IMR-90 (cell line): ENCODE measurements at regions of chr1 and their contacts with region 1.

Region 1: DNA sequence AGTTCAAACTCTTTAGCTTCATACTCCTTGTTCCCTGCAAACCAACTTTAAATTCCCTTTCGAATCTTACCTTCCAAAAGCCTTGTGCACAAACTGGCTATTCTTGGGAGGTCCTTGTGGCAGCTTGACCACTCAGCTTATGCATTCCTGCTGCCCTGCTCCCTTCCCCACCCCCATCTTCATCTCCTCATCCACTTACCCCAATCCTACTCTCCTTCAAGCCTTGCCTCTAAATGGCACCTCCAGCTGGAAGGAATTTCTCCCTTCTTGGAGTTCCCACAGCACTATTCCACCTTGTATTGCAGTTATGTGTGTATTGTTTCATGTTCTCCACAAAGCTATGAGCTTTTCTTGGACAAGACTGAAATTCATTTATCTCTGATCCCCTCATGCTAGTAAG is 15.3 kb upstream of the DIRAS3 start:
- DNase-seq: no peak
- ATAC-seq: no peak
- H3K4me3 ChIP-seq: no peak overlapping the region
- H3K27ac ChIP-seq: no peak overlapping the region
- H3K4me1 ChIP-seq: no peaks in the 10 kb centered on the region
- H3K27me3 ChIP-seq: no peaks in the 10 kb centered on the region
- CTCF ChIP-seq: no peak
- POLR2A ChIP-seq: no peak
- RAD21 ChIP-seq: no peak

Region 2: GRCh38 chr1:67250051-67250653 is 815.6 kb before region 1 on chr1:
- CTCF ChIA-PET with region 1: no interaction called
- POLR2A ChIA-PET with region 1: no interaction called
- dilution Hi-C with region 1: no loop called
- in situ Hi-C with region 1: no loop called
- intact Hi-C with region 1: no loop called
- DNase-seq: no peak
- ATAC-seq: no peak
- H3K4me3 ChIP-seq: no peak overlapping the region
- H3K27ac ChIP-seq: no peak overlapping the region
- H3K4me1 ChIP-seq: no peaks in the 10 kb centered on the region
- H3K27me3 ChIP-seq: no peaks in the 10 kb centered on the region
- CTCF ChIP-seq: no peak
- POLR2A ChIP-seq: no peak
- RAD21 ChIP-seq: no peak

Region 3: GRCh38 chr1:67590329-67590728 is 475.4 kb before region 1 on chr1:
- CTCF ChIA-PET with region 1: no interaction called
- POLR2A ChIA-PET with region 1: no interaction called
- dilution Hi-C with region 1: no loop called
- in situ Hi-C with region 1: no loop called
- intact Hi-C with region 1: no loop called
- DNase-seq: peak; percentile 45
- ATAC-seq: peak; percentile 37
- H3K4me3 ChIP-seq: no peak overlapping the region
- H3K27ac ChIP-seq: no peak overlapping the region
- H3K4me1 ChIP-seq: peaks cover 1% of the 10 kb centered on the region; the same call in 1 of the 2 replicates
- H3K27me3 ChIP-seq: no peaks in the 10 kb centered on the region; the same call in 1 of the 2 replicates
- CTCF ChIP-seq: no peak
- POLR2A ChIP-seq: no peak
- RAD21 ChIP-seq: no peak

Region 4: DNA sequence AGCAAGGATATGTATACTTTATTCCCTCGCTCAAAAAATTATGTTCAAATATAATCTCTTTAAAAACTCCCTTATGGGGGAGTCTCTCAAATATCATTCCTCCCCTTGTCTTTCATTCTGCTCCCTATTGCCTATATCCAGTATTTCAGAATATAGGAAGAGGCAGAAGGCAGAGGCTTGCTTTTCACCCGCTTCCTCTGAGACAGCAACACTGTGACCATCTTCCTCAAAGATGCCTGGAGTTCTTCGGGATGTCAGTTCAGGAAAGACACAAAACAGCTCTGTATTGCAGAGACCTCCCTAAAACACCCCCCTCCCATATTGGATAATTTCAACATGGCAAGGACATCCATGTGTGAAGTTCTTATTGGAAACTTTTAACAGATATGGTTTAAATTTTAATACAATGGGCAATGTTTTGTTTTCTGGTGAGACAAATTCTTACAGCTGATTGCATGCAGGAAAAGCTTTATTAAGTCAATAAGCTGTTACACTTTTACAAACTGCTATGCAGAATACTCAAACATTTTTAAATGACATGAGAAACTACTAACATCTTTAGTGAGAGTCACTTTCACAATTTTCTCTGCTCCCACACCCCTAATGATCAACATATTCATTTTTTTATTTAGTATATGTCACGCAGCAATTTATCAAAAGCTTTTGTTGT is 20.1 kb before region 1 on chr1:
- CTCF ChIA-PET with region 1: no interaction called
- POLR2A ChIA-PET with region 1: no interaction called
- dilution Hi-C with region 1: no loop called
- in situ Hi-C with region 1: no loop called
- intact Hi-C with region 1: loop called (anchors 1 kb)
- DNase-seq: no peak
- ATAC-seq: no peak
- H3K4me3 ChIP-seq: no peak overlapping the region
- H3K27ac ChIP-seq: no peak overlapping the region
- H3K4me1 ChIP-seq: no peaks in the 10 kb centered on the region
- H3K27me3 ChIP-seq: no peaks in the 10 kb centered on the region
- CTCF ChIP-seq: no peak
- POLR2A ChIP-seq: no peak
- RAD21 ChIP-seq: no peak

Region 5: GRCh38 chr1:68206848-68207689 is 141.3 kb after region 1 on chr1:
- CTCF ChIA-PET with region 1: no interaction called
- POLR2A ChIA-PET with region 1: no interaction called
- dilution Hi-C with region 1: no loop called
- in situ Hi-C with region 1: no loop called
- intact Hi-C with region 1: no loop called
- DNase-seq: peak; percentile 64
- ATAC-seq: peak; percentile 24
- H3K4me3 ChIP-seq: no peak overlapping the region
- H3K27ac ChIP-seq: no peak overlapping the region
- H3K4me1 ChIP-seq: peaks cover 22% of the 10 kb centered on the region
- H3K27me3 ChIP-seq: no peaks in the 10 kb centered on the region
- CTCF ChIP-seq: no peak
- POLR2A ChIP-seq: no peak
- RAD21 ChIP-seq: no peak